CD8-positive, alpha-beta T cell (primary cell): ENCODE measurements at regions of chrX and their contacts with region 1.

Region 1: GRCh38 chrX:54044126-54044876 is at the start of gene PHF8:
- DNase-seq: peak; percentile 87 to 96 (median 95)
- ATAC-seq: peak; percentile 82
- H3K4me3 ChIP-seq: peak within 1 kb of the TSS; percentile 75 to 86
- H3K4me3 Mint-ChIP-seq: peak within 1 kb of the TSS; percentile 94
- H3K27ac ChIP-seq: peak within 1 kb of the TSS; percentile 85 to 95
- H3K27ac Mint-ChIP-seq: peak within 1 kb of the TSS; percentile 97
- H3K4me1 ChIP-seq: peaks cover 11% of the 10 kb centered on the region
- H3K4me1 Mint-ChIP-seq: peaks cover 29% of the 10 kb centered on the region
- H3K27me3 ChIP-seq: no peaks in the 10 kb centered on the region
- H3K27me3 Mint-ChIP-seq: no peaks in the 10 kb centered on the region
- CTCF ChIP-seq: no peak
- total RNA-seq, gene PHF8: 41.8 to 43.7 TPM

Region 2: DNA sequence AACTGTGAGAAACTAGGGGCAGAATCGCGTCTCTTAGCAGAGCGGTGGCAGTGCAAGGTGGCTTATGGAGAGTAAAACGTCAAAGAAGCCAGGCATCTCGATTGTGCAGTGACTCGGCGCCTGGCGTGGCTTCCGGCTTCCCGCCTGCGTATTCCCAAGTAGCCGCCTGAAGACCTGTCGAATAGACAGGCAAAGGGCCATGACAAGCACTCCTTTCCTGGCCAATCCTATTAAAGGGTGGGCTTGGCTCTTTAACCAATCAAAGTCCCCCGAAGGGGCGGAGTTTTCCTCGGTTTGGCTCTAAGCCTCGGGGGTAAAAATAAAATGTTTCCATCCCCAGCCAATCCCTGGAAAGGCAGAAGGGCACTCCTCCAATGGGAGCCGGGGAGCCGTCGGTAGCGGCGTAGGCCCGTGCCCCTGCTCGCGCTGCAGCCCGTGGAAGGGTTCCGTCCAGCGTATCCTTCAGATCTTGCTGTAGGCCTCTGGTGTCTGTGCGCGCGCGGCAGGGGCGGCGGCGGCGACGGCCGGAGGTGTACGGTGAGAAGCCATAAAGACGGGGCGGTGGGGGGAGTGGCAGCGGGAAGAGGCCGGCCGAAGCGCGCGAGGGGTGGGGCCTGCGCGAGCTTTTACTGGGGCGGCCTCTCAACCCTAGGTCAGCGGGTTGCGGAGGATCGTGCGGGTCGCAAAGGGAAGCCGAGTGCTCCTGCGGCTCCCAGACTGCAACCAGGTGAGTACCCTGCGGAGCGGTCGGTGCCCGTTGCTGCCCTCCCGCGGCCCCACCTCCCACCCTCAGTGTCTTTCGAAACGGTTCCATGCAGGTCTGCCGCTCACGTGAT is 950.3 kb before region 1 on chrX and contains the start of gene KANTR:
- CTCF ChIA-PET with region 1: no interaction called
- POLR2A ChIA-PET with region 1: no interaction called
- intact Hi-C with region 1: loop called in 1 of 2 experiments (anchors 5 kb)
- DNase-seq: peak; percentile 58 to 92 (median 80)
- ATAC-seq: peak; percentile 76
- H3K4me3 ChIP-seq: peak within 1 kb of the TSS; percentile 67 to 77
- H3K4me3 Mint-ChIP-seq: peak within 1 kb of the TSS; percentile 88
- H3K27ac ChIP-seq: peak within 1 kb of the TSS; percentile 68 to 77
- H3K27ac Mint-ChIP-seq: peak within 1 kb of the TSS; percentile 91
- H3K4me1 ChIP-seq: peaks cover 3% of the 10 kb centered on the region
- H3K4me1 Mint-ChIP-seq: peaks cover 27% of the 10 kb centered on the region
- H3K27me3 ChIP-seq: no peaks in the 10 kb centered on the region
- H3K27me3 Mint-ChIP-seq: no peaks in the 10 kb centered on the region
- CTCF ChIP-seq: no peak
- total RNA-seq, gene KANTR: 7.7 to 8.6 TPM

Region 3: GRCh38 chrX:53683556-53684414 is 360.5 kb before region 1 on chrX:
- CTCF ChIA-PET with region 1: no interaction called
- POLR2A ChIA-PET with region 1: interaction called, 18 read pairs
- intact Hi-C with region 1: loop called (anchors 1 kb)
- DNase-seq: peak; percentile 75 to 98 (median 86)
- ATAC-seq: peak; percentile 78
- H3K4me3 ChIP-seq: peak overlapping the region; percentile 76 to 86
- H3K4me3 Mint-ChIP-seq: peak overlapping the region; percentile 88
- H3K27ac ChIP-seq: peak overlapping the region; percentile 94 to 97
- H3K27ac Mint-ChIP-seq: peak overlapping the region; percentile 97
- H3K4me1 ChIP-seq: peaks cover 31% of the 10 kb centered on the region
- H3K4me1 Mint-ChIP-seq: peaks cover 49% of the 10 kb centered on the region
- H3K27me3 ChIP-seq: no peaks in the 10 kb centered on the region
- H3K27me3 Mint-ChIP-seq: no peaks in the 10 kb centered on the region
- CTCF ChIP-seq: no peak

Region 4: GRCh38 chrX:54439967-54440871 is 395.9 kb after region 1 on chrX and contains the start of gene TSR2:
- CTCF ChIA-PET with region 1: no interaction called
- POLR2A ChIA-PET with region 1: interaction called, 11 read pairs
- intact Hi-C with region 1: loop called (anchors 1 to 2 kb)
- DNase-seq: peak; percentile 55 to 90 (median 78)
- ATAC-seq: peak; percentile 93
- H3K4me3 ChIP-seq: peak within 1 kb of the TSS; percentile 93 to 96
- H3K4me3 Mint-ChIP-seq: peak within 1 kb of the TSS; percentile 92
- H3K27ac ChIP-seq: peak within 1 kb of the TSS; percentile 66 to 73
- H3K27ac Mint-ChIP-seq: peak within 1 kb of the TSS; percentile 91
- H3K4me1 ChIP-seq: peaks cover 21% of the 10 kb centered on the region
- H3K4me1 Mint-ChIP-seq: peaks cover 31% of the 10 kb centered on the region
- H3K27me3 ChIP-seq: no peaks in the 10 kb centered on the region
- H3K27me3 Mint-ChIP-seq: no peaks in the 10 kb centered on the region
- CTCF ChIP-seq: no peak
- total RNA-seq, gene TSR2: 38.7 to 41.4 TPM

Region 5: DNA sequence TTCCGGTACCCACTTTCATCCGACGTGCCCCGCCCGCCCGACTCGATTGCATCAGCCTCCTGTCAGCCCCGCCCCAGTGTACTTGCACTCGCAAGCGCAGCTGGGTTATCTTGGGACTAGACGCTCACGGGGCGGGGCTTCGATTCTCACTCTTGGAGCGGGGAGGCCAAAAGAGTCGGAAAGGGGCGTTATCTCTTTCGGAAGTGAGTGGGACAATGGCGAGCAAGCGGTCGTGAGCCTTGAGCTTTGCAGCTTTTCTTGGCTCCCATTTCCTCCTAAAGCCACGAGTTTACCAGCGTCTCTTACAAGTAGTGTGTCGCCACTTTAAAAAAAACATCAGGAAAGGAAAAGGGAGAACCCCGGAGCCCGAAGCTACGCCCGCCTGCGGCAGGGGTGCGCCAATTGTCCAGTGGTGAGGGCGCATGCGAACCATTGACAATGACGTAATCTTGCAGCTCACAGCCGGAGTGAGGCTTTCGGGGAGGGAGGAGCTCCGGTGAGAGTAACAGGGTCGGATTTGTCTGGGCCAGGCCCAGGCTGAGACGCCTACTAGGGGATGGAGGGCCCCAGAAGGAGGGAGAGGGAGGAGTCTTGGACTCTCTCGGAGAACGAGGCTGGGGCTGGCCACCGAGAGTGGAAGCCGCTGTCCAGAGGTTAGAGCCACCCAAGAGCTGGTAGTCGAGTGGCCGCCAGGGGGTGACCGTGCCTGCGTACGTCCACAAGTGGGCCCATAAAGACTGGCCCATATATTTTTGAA is 595.2 kb after region 1 on chrX:
- CTCF ChIA-PET with region 1: no interaction called
- POLR2A ChIA-PET with region 1: interaction called, 9 read pairs
- intact Hi-C with region 1: loop called in 1 of 2 experiments (anchors 1 kb)
- DNase-seq: peak; percentile 80 to 97 (median 92)
- ATAC-seq: peak; percentile 88
- H3K4me3 ChIP-seq: peak overlapping the region; percentile 60 to 94
- H3K4me3 Mint-ChIP-seq: peak overlapping the region; percentile 97
- H3K27ac ChIP-seq: peak overlapping the region; percentile 97 to 99
- H3K27ac Mint-ChIP-seq: peak overlapping the region; percentile 99
- H3K4me1 ChIP-seq: peaks cover 6% of the 10 kb centered on the region
- H3K4me1 Mint-ChIP-seq: peaks cover 9% of the 10 kb centered on the region
- H3K27me3 ChIP-seq: no peaks in the 10 kb centered on the region
- H3K27me3 Mint-ChIP-seq: no peaks in the 10 kb centered on the region
- CTCF ChIP-seq: peak; percentile 22